ENCODE measurements at regions of chr11 and their contacts with region 1.

Region 1: GRCh38 chr11:16395601-16396000 is 39.3 kb upstream of the SOX6 start:
- DNase-seq: no peak
- H3K4me3 Mint-ChIP-seq: peak overlapping the region; percentile 35
- H3K27ac Mint-ChIP-seq: peak overlapping the region; percentile 33
- H3K4me1 Mint-ChIP-seq: peaks cover 36% of the 10 kb centered on the region
- H3K27me3 Mint-ChIP-seq: no peaks in the 10 kb centered on the region
- CTCF ChIP-seq: no peak

Region 2: DNA sequence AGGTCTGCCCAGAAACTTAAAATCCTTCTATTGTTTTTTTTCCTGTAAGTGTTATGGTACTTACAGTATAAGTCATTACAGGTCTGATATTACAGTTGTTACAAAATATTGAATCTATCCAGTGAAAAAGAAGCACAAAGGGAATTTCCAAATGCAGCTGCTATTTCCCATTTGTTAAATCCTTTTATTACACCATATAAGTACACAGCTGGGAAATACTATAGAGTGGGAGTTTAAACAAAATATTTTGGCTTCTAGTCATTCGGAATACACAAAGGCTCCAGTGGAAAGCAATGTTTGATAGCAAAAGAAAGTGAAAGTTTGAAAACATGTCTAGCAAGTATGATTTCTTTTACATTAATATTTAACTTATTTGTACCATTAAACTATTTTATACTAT is 57.2 kb before region 1 on chr11:
- CTCF ChIA-PET with region 1: no interaction called
- intact Hi-C with region 1: loop called (anchors 5 kb)
- DNase-seq: no peak
- H3K4me3 Mint-ChIP-seq: no peak overlapping the region
- H3K27ac Mint-ChIP-seq: peak overlapping the region; percentile 74
- H3K4me1 Mint-ChIP-seq: peaks cover 40% of the 10 kb centered on the region
- H3K27me3 Mint-ChIP-seq: no peaks in the 10 kb centered on the region
- CTCF ChIP-seq: no peak

Measured in Calu3 (cell line).